Caco-2 (cell line): ENCODE measurements at regions of chr15 and their contacts with region 1.

Region 1: GRCh38 chr15:53512030-53512429 is 247.4 kb downstream of the WDR72 start:
- DNase-seq: no peak
- H3K4me3 ChIP-seq: no peak overlapping the region
- H3K4me3 Mint-ChIP-seq: no peak overlapping the region
- H3K27ac Mint-ChIP-seq: no peak overlapping the region
- H3K4me1 ChIP-seq: no peaks in the 10 kb centered on the region
- H3K4me1 Mint-ChIP-seq: no peaks in the 10 kb centered on the region
- H3K27me3 ChIP-seq: no peaks in the 10 kb centered on the region
- H3K27me3 Mint-ChIP-seq: no peaks in the 10 kb centered on the region
- CTCF ChIP-seq: peak; percentile 27 to 38

Region 2: DNA sequence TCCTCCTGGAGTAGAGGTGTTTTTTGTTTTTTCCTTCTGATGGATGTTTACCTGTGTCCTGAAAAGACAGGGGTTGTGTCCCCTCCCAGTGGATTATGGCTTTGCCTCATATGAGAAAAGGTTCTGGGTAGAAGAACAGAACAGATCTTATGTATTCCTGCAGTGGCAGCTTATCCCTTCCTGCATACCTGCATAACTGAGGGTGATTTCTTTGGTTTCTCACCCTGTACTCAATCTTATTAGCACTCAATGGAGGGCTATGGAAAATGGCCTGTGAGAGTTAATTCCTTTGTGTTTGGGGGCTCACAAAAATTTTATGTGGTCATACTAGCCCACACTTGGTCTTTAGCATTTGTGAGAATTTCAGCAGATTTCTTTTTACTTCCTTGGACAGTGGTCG is 239.9 kb before region 1 on chr15:
- CTCF ChIA-PET with region 1: no interaction called
- POLR2A ChIA-PET with region 1: no interaction called
- intact Hi-C with region 1: no loop called
- DNase-seq: no peak
- H3K4me3 ChIP-seq: no peak overlapping the region
- H3K4me3 Mint-ChIP-seq: no peak overlapping the region
- H3K27ac Mint-ChIP-seq: no peak overlapping the region
- H3K4me1 ChIP-seq: no peaks in the 10 kb centered on the region
- H3K4me1 Mint-ChIP-seq: no peaks in the 10 kb centered on the region
- H3K27me3 ChIP-seq: no peaks in the 10 kb centered on the region; the same call in 1 of the 2 replicates
- H3K27me3 Mint-ChIP-seq: peaks cover 7% of the 10 kb centered on the region
- CTCF ChIP-seq: no peak

Region 3: GRCh38 chr15:53307952-53308621 is 203.9 kb before region 1 on chr15:
- CTCF ChIA-PET with region 1: no interaction called
- POLR2A ChIA-PET with region 1: no interaction called
- intact Hi-C with region 1: loop called (anchors 10 kb)
- DNase-seq: no peak
- H3K4me3 ChIP-seq: no peak overlapping the region
- H3K4me3 Mint-ChIP-seq: no peak overlapping the region
- H3K27ac Mint-ChIP-seq: no peak overlapping the region
- H3K4me1 ChIP-seq: no peaks in the 10 kb centered on the region
- H3K4me1 Mint-ChIP-seq: no peaks in the 10 kb centered on the region
- H3K27me3 ChIP-seq: no peaks in the 10 kb centered on the region
- H3K27me3 Mint-ChIP-seq: peaks cover 6% of the 10 kb centered on the region
- CTCF ChIP-seq: no peak

Region 4: GRCh38 chr15:53434174-53434678 is 77.8 kb before region 1 on chr15:
- CTCF ChIA-PET with region 1: no interaction called
- POLR2A ChIA-PET with region 1: no interaction called
- intact Hi-C with region 1: no loop called
- DNase-seq: no peak
- H3K4me3 ChIP-seq: no peak overlapping the region
- H3K4me3 Mint-ChIP-seq: no peak overlapping the region
- H3K27ac Mint-ChIP-seq: no peak overlapping the region
- H3K4me1 ChIP-seq: no peaks in the 10 kb centered on the region
- H3K4me1 Mint-ChIP-seq: no peaks in the 10 kb centered on the region
- H3K27me3 ChIP-seq: no peaks in the 10 kb centered on the region
- H3K27me3 Mint-ChIP-seq: no peaks in the 10 kb centered on the region
- CTCF ChIP-seq: no peak

Region 5: DNA sequence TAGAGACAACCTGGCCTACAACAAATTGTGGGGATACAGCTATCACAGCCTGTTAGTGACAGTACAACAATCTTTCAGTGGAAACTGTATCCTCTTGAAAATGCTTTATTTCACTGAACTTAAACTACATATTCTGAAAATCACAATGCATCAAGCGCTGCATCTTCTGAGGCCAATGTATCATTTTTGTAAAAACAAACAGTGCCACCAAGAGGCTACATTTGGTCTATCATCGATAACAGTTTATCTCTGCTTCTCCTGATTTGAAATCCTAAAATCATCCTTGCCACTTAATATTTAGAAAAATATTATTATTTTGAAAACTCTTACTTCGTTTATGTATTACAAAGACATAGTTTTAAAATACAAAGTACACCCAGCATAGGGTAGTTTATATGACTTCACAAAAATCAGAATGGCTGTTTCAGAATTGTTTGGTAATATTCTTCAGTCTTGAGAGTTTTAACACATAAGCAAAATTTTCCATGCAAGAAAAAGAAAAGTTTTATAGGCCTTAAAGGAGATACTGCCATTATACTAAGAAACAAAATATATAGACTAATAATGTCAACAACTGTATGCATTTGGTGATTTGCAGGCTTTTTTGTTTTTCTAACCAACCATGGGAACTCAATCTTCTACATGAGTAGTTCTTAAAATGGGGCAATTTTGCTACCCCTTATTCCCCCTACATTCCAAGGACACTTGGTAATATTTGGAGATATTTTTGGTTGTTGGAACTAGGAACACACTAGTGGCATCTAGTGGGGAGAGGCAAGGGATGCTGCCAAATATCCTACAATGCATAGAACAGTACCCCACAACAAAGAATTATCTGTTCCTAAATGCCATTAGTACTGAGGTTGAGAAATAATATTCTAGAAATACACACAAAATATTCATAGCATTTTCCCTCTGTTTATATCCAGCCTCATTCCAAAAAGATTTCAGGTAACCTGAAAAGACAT is 205.2 kb after region 1 on chr15:
- CTCF ChIA-PET with region 1: no interaction called
- POLR2A ChIA-PET with region 1: no interaction called
- intact Hi-C with region 1: loop called (anchors 10 kb)
- DNase-seq: peak in 1 of 2 experiments; percentile 4
- H3K4me3 ChIP-seq: no peak overlapping the region
- H3K4me3 Mint-ChIP-seq: no peak overlapping the region
- H3K27ac Mint-ChIP-seq: no peak overlapping the region
- H3K4me1 ChIP-seq: no peaks in the 10 kb centered on the region
- H3K4me1 Mint-ChIP-seq: no peaks in the 10 kb centered on the region
- H3K27me3 ChIP-seq: no peaks in the 10 kb centered on the region; the same call in 1 of the 2 replicates
- H3K27me3 Mint-ChIP-seq: peaks cover 8% of the 10 kb centered on the region
- CTCF ChIP-seq: peak; percentile 30 to 42